Left colon (tissue), 2 donors: ENCODE measurements at regions of chr12 and their contacts with region 1.

Region 1: DNA sequence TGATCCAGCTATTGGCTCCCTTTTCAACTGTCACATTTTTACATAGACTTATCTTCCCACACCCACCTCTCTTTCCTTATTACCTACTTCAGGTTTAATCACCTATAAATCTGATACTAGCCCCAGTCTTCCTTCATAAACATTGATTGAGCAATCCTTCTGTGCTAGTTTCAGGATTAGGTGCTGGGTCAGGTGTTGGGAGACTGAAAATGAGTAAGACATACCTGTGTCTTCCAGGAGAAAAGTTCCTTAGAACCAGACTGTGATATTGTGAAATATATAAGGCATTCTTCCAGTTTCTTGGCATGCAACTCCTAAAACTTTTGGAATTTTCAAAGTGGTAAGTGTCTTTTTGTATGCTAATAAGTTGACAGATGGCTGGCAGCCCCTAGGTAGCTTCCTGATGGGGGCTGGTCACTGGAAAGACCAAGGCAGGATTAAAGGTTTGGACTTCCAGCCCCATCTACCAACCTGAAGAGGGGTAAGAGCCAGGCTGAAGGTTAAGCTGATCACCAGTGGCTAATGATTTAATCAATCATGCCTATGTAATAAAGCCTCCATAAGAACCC is 4.6 kb downstream of the ANO6 start:
- DNase-seq: no peak
- ATAC-seq: peak; percentile 27

Region 2: DNA sequence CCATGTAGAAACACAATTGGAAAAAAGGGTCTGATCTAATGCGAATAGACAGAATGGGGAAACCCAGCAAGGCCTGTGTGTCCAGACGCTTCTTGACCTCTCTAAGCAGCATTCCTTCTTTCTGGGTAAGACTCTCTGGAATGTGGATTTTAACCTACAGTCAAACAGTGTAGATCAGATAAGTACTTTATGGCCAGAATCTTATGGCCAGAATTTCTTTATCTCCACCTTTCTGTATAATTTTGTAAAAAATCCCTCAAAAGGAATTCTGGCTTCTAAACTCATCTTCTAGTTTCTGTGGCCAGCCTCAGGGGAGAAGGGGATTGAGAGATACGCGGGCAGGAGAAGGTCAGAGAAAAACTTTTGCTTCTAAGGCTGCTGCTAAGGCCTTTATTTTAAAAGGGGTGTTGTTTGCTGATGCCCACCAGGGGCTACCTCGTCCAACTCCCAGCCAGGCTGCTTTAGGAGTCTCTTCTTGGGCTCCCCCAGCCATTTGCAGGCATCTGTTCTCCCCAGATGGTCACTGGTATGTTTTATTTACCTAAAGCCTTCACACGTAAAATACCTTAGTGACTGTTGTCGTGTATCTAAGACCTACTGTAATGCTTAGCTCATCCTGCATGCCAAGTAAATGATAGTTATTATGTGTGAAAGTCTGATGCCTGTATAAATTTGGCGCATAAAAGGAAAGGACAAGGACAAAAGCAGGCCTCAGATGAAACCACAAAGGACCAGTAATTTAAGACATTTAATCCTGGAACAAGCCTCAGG is 63.9 kb after region 1 on chr12:
- intact Hi-C with region 1: loop called in 1 of 2 experiments (anchors 10 kb)
- DNase-seq: no peak
- ATAC-seq: peak; percentile 41

Region 3: DNA sequence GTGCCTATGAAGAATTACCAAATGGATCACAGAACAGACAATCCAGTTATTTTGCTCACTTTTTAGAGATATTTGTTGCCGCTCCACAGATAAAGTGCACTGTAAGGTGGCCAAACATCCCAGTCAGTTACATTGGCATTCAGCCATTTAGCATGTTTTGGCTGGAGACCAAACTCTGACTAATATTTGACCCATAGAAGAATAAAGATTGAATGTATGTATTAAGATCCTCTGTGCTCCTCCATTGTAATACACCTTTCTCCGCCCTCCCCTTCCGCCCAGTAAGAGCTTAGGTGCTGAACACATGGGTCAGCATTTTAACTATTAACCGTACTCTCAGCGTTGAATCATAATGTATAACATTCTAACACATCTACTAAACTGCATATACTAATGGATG is 158.8 kb after region 1 on chr12:
- intact Hi-C with region 1: no loop called
- DNase-seq: no peak
- ATAC-seq: no peak